ENCODE measurements at regions of chr18 and their contacts with region 1.

Region 1: DNA sequence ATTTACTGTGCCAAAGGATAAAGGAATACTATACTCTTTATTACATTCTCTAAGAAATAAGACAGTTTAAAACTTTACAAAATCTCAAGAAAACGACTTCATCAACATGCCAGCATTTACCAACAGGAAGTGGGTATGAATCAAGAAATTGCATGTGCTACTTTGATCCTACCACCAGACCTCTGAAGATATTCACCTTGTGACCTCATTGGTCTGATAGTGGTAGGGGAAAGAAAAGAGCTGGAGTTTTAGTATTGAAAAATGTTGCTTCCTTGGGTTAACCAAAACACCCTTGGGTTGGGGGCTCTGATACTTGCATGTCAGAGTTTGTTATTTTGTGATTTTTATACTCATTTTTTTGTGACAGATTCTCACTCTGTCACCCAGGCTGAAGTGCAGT is 84.1 kb upstream of the LPIN2 start:
- DNase-seq: no peak
- H3K4me3 ChIP-seq: no peak overlapping the region
- H3K27me3 ChIP-seq: peaks cover 2% of the 10 kb centered on the region; the same call in 1 of the 2 replicates
- CTCF ChIP-seq: no peak

Region 2: GRCh38 chr18:2948038-2948437 is 149.0 kb before region 1 on chr18:
- CTCF ChIA-PET with region 1: no interaction called
- POLR2A ChIA-PET with region 1: no interaction called
- DNase-seq: no peak
- H3K4me3 ChIP-seq: no peak overlapping the region
- H3K27me3 ChIP-seq: no peaks in the 10 kb centered on the region
- CTCF ChIP-seq: peak; percentile 47

Region 3: GRCh38 chr18:3350566-3351527 is 253.8 kb after region 1 on chr18:
- CTCF ChIA-PET with region 1: no interaction called
- POLR2A ChIA-PET with region 1: interaction called, 17 read pairs
- DNase-seq: no peak
- H3K4me3 ChIP-seq: no peak overlapping the region
- H3K27me3 ChIP-seq: no peaks in the 10 kb centered on the region
- CTCF ChIP-seq: no peak

Measured in BJ (cell line).